A673 (cell line): ENCODE measurements at regions of chr2 and their contacts with region 1.

Region 1: GRCh38 chr2:177332041-177332991 is 60.3 kb upstream of the AGPS start:
- DNase-seq: peak; percentile 83
- H3K4me3 ChIP-seq: no peak overlapping the region
- H3K27ac ChIP-seq: peak overlapping the region; percentile 6
- H3K4me1 ChIP-seq: peaks cover 18% of the 10 kb centered on the region
- H3K27me3 ChIP-seq: no peaks in the 10 kb centered on the region
- CTCF ChIP-seq: peak; percentile 81

Region 2: GRCh38 chr2:176356251-176356650 is 976.1 kb before region 1 on chr2:
- CTCF ChIA-PET with region 1: no interaction called
- POLR2A ChIA-PET with region 1: no interaction called
- intact Hi-C with region 1: no loop called
- DNase-seq: no peak
- H3K4me3 ChIP-seq: no peak overlapping the region
- H3K27ac ChIP-seq: no peak overlapping the region
- H3K4me1 ChIP-seq: no peaks in the 10 kb centered on the region
- H3K27me3 ChIP-seq: no peaks in the 10 kb centered on the region
- CTCF ChIP-seq: no peak

Region 3: DNA sequence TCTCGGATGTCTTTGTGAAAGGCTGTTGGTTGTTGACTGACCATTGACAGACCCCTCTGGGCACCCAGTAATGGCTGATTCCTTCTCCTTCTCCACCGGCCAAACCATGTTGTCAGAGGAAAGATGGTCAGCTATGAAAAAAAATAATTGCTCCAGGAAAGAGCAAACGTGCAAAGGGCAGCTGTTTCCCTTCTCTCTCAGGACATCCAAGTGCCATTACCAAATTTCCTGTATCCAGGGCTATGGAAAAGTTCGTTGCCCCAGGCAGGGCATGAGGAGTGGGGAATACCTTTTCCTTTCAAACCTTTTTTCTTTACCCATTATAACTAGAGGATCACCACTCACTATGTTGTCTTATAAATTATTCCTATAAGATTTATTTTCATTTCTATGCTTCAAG is 441.2 kb before region 1 on chr2:
- CTCF ChIA-PET with region 1: no interaction called
- POLR2A ChIA-PET with region 1: no interaction called
- intact Hi-C with region 1: no loop called
- DNase-seq: no peak
- H3K4me3 ChIP-seq: no peak overlapping the region
- H3K27ac ChIP-seq: no peak overlapping the region
- H3K4me1 ChIP-seq: no peaks in the 10 kb centered on the region
- H3K27me3 ChIP-seq: no peaks in the 10 kb centered on the region
- CTCF ChIP-seq: no peak

Region 4: DNA sequence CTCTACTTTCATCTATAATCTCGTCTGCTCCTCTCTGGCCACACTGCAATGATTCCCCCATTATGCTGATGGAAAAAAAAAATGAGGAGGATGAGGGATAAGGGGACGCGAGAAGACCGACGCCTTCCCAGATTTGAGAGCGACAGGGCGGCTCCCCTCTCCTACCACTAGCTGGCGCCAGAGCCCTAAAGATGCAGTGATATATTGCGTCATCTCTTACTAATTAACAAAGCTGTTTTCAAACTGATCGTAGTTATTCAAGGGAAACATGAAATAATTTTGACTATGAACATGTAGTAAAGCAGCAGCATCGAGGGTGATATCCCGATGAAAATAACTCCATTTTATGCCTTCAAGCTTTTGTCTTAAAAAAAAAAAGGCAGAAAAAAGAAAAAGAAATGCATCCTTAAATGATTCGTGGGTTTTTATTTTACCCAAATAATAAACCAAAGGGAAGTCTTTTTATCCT is 167.7 kb before region 1 on chr2:
- CTCF ChIA-PET with region 1: interaction called, 12 read pairs
- POLR2A ChIA-PET with region 1: no interaction called
- intact Hi-C with region 1: loop called (anchors 1 kb)
- DNase-seq: peak; percentile 89
- H3K4me3 ChIP-seq: peak overlapping the region; percentile 28
- H3K27ac ChIP-seq: peak overlapping the region; percentile 66
- H3K4me1 ChIP-seq: peaks cover 48% of the 10 kb centered on the region
- H3K27me3 ChIP-seq: no peaks in the 10 kb centered on the region
- CTCF ChIP-seq: peak; percentile 100

Region 5: DNA sequence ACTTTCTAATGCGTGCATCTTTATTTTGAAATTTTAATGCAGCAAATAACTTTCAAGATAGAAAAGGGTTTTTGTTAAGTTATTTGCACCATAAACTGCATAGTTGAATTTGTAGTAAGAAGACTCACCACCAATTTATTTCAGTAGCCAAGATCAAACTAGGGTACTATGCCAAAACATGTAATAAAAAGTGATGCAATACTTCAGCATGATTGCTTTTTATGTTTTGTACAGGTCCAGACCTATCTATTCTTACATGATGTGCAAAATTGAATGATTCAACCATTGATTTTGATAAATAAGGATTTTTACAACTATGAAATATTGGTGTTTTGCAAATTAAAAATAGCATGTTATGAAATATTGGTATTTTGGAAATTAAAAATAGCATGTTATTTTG is 87.0 kb after region 1 on chr2:
- CTCF ChIA-PET with region 1: no interaction called
- POLR2A ChIA-PET with region 1: no interaction called
- intact Hi-C with region 1: loop called (anchors 1 kb)
- DNase-seq: peak; percentile 40
- H3K4me3 ChIP-seq: no peak overlapping the region
- H3K27ac ChIP-seq: peak overlapping the region; percentile 56
- H3K4me1 ChIP-seq: peaks cover 35% of the 10 kb centered on the region
- H3K27me3 ChIP-seq: no peaks in the 10 kb centered on the region
- CTCF ChIP-seq: no peak

Region 6: GRCh38 chr2:177604271-177605065 is 272.2 kb after region 1 on chr2:
- CTCF ChIA-PET with region 1: no interaction called
- POLR2A ChIA-PET with region 1: no interaction called
- intact Hi-C with region 1: loop called (anchors 5 kb)
- DNase-seq: peak; percentile 77
- H3K4me3 ChIP-seq: peak overlapping the region; percentile 18
- H3K27ac ChIP-seq: peak overlapping the region; percentile 51
- H3K4me1 ChIP-seq: peaks cover 49% of the 10 kb centered on the region
- H3K27me3 ChIP-seq: no peaks in the 10 kb centered on the region
- CTCF ChIP-seq: peak; percentile 84

Region 7: DNA sequence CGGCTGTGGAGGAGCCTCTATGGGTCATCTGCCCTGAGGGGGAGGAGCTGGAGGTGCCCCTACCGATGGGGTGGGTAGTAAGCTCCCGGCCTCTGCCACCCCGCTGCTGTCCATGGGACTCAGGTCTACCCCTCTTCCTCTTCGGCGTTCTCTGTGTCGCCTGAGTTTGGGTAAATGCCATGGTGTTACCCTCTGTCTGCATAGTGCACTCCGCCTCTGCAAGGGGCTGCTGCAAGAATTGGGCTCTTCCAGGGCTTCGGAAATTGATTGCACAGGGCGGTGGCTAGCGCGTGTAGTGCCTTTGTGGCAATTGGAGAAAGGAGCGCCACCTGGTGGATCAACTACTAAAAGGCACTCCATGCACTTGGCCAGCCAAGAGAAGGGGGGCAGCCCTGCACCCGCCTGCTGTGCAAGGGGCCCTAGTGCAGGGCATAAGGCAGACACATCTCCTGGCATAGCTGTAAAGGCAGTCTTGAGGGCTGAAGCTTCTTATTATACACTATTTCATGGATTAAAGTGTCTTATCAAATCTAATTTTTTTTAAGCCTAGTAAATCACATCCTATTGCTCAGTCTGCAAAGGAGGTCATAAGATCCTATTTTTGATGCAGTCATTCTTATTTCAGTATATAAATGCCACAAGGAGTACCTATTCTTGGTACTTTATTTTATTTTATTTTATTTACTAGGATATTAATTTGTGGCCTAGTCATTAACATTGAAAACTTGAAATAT is 431.4 kb after region 1 on chr2:
- CTCF ChIA-PET with region 1: no interaction called
- POLR2A ChIA-PET with region 1: no interaction called
- intact Hi-C with region 1: loop called (anchors 2 kb)
- DNase-seq: peak; percentile 90
- H3K4me3 ChIP-seq: no peak overlapping the region
- H3K27ac ChIP-seq: no peak overlapping the region
- H3K4me1 ChIP-seq: no peaks in the 10 kb centered on the region
- H3K27me3 ChIP-seq: no peaks in the 10 kb centered on the region
- CTCF ChIP-seq: peak; percentile 93

Region 8: DNA sequence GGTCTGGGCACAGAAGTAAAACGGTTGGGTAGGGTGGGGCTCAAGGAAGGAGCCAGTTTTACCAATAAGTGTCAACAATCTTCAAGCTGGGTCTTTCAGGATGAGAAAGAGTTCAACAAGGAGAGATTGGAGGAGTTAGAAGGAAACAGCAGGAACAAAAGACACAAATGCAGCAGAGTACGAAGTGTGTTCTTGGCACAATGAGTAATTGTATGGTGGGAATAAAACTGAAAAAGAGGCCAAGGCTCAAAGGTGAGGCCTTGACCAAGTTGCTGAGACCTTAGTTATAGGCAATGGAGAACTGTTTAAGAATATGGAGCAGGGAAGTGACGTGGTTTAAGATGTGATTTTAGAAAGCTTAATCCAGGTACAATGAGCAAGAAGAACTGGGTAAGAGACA is 509.9 kb after region 1 on chr2:
- CTCF ChIA-PET with region 1: no interaction called
- POLR2A ChIA-PET with region 1: no interaction called
- intact Hi-C with region 1: no loop called
- DNase-seq: no peak
- H3K4me3 ChIP-seq: no peak overlapping the region
- H3K27ac ChIP-seq: no peak overlapping the region
- H3K4me1 ChIP-seq: no peaks in the 10 kb centered on the region
- H3K27me3 ChIP-seq: no peaks in the 10 kb centered on the region
- CTCF ChIP-seq: no peak

Region 9: GRCh38 chr2:178029342-178029741 is 697.0 kb after region 1 on chr2:
- CTCF ChIA-PET with region 1: no interaction called
- POLR2A ChIA-PET with region 1: no interaction called
- intact Hi-C with region 1: no loop called
- DNase-seq: no peak
- H3K4me3 ChIP-seq: no peak overlapping the region
- H3K27ac ChIP-seq: no peak overlapping the region
- H3K4me1 ChIP-seq: no peaks in the 10 kb centered on the region
- H3K27me3 ChIP-seq: no peaks in the 10 kb centered on the region
- CTCF ChIP-seq: no peak